ENCODE measurements at regions of chr10 and their contacts with region 1.

Region 1: DNA sequence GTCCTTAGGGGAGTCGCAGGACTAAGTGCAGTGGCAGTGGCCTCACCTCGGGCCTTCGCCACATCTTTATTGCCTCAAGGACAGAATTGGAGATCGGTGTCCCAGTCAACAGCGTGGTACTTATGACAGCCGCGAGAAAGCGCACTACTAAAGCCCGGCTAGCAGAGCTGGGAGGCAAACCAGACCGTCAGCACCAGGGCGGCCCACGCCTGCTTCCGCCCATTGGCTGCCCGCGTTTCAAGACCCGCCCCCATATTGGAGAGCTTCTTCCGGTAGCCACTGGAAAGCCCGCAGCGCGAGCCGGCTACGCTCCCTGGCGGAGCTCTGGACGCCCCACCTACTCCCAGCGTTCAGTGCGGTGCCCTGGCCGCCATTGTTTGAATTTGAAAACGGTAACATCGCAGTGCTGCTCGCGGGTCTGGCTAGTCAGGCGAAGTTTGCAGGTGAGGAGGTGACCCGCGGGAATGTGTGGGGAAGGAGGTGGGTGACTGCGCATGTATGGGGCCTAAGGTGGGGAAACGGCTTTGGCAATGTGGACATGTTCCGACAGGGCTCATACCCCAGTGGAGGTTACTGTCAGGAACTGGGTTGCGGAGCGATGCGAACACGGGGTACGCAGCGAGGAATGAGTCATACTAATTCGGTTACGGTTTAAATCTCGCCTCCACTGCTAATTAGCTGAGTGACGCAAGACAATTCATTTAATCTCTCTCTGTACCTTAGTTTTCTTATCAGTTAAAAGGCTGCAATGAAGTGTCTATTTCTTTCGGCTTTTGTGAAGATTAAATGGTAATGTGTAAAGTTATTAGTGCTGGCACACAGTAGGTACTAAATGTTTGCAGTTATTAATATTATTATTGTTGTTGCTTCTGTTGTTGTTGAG is at the start of gene KIF20B:
- DNase-seq: peak; percentile 84 to 96 (median 94)
- ATAC-seq: peak; percentile 99
- H3K4me3 ChIP-seq: peak within 1 kb of the TSS; percentile 92
- H3K4me3 Mint-ChIP-seq: peak within 1 kb of the TSS; percentile 94 to 100 (median 98)
- H3K27ac ChIP-seq: peak within 1 kb of the TSS; percentile 76
- H3K27ac Mint-ChIP-seq: peak within 1 kb of the TSS; percentile 93 to 99 (median 97)
- H3K4me1 ChIP-seq: peaks cover 8 to 11% of the 10 kb centered on the region in 2 donors
- H3K4me1 Mint-ChIP-seq: peaks cover 22 to 51% (median 41%) of the 10 kb centered on the region in 7 donors
- H3K27me3 ChIP-seq: no peaks in the 10 kb centered on the region
- H3K27me3 Mint-ChIP-seq: no peaks in the 10 kb centered on the region
- total RNA-seq, gene KIF20B: 14.5 to 49.0 (median 19.3) TPM

Region 2: GRCh38 chr10:88990384-88991160 is 710.9 kb before region 1 on chr10 and contains the start of gene FAS:
- CTCF ChIA-PET with region 1: no interaction called
- POLR2A ChIA-PET with region 1: interaction called, 3 read pairs
- intact Hi-C with region 1: loop called in 1 of 2 experiments (anchors 5 kb)
- DNase-seq: peak; percentile 50 to 81 (median 61)
- ATAC-seq: peak; percentile 86
- H3K4me3 ChIP-seq: peak within 1 kb of the TSS; percentile 86
- H3K4me3 Mint-ChIP-seq: peak within 1 kb of the TSS; percentile 92 to 100 (median 96)
- H3K27ac ChIP-seq: peak within 1 kb of the TSS; percentile 77
- H3K27ac Mint-ChIP-seq: peak within 1 kb of the TSS; percentile 91 to 96 (median 94)
- H3K4me1 ChIP-seq: peaks cover 42 to 45% of the 10 kb centered on the region in 2 donors
- H3K4me1 Mint-ChIP-seq: peaks cover 41 to 83% (median 68%) of the 10 kb centered on the region in 7 donors
- H3K27me3 ChIP-seq: no peaks in the 10 kb centered on the region
- H3K27me3 Mint-ChIP-seq: no peaks in the 10 kb centered on the region
- total RNA-seq, gene FAS: 5.6 to 67.4 (median 8.3) TPM

Region 3: DNA sequence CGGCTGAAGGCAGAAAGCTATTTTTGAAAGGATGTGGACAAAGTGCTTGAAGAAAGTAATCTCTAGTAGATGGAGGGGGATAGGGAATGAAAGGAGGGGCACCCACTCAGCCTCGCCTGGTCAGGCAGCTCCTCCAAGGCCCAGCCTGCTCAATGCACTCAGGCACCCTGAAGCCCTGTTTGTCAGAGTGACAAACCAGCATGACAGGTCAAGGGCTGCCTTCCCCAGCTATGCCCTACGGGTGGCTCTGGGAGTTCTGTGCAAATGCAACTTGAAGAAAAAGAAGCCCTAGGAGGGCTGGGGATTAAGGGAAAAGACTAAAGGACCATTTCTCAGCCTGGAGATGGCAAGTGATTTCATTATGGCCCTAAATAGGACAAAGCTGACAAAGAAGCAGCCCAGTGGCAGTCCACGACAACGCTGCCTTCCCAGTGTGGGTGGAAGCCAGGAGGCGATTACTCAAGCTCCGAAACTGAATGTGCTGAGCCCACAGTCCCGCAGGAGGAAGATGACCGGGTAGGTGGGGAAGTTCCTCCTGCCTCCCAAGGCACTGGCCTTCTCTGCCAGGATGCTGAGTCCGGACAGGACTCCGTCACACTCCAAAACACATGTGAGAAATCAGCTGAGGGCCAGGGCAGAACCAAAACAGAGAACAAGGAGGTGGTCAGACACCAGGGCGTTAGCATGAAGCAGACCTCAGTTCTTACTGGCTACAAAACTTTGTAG is 466.2 kb before region 1 on chr10:
- CTCF ChIA-PET with region 1: no interaction called
- POLR2A ChIA-PET with region 1: no interaction called
- intact Hi-C with region 1: no loop called
- DNase-seq: no peak
- ATAC-seq: peak; percentile 83
- H3K4me3 ChIP-seq: no peak overlapping the region
- H3K4me3 Mint-ChIP-seq: no peak overlapping the region
- H3K27ac ChIP-seq: no peak overlapping the region
- H3K27ac Mint-ChIP-seq: no peak overlapping the region
- H3K4me1 ChIP-seq: no peaks in the 10 kb centered on the region
- H3K4me1 Mint-ChIP-seq: peaks cover 0 to 6% (median 0%) of the 10 kb centered on the region in 7 donors
- H3K27me3 ChIP-seq: no peaks in the 10 kb centered on the region
- H3K27me3 Mint-ChIP-seq: no peaks in the 10 kb centered on the region

Region 4: GRCh38 chr10:89301721-89302445 is 399.6 kb before region 1 on chr10 and contains the start of gene IFIT2:
- CTCF ChIA-PET with region 1: no interaction called
- POLR2A ChIA-PET with region 1: no interaction called
- intact Hi-C with region 1: loop called in 1 of 2 experiments (anchors 1 kb)
- DNase-seq: peak in 7 of 9 donors; percentile 50 to 72 (median 60)
- ATAC-seq: peak; percentile 86
- H3K4me3 ChIP-seq: peak within 1 kb of the TSS; percentile 76
- H3K4me3 Mint-ChIP-seq: peak within 1 kb of the TSS; percentile 83 to 99 (median 94)
- H3K27ac ChIP-seq: peak within 1 kb of the TSS; percentile 71
- H3K27ac Mint-ChIP-seq: peak within 1 kb of the TSS; percentile 88 to 98 (median 97)
- H3K4me1 ChIP-seq: peaks cover 15 to 24% of the 10 kb centered on the region in 2 donors
- H3K4me1 Mint-ChIP-seq: peaks cover 24 to 60% (median 44%) of the 10 kb centered on the region in 7 donors
- H3K27me3 ChIP-seq: no peaks in the 10 kb centered on the region
- H3K27me3 Mint-ChIP-seq: peaks cover 0 to 25% (median 0%) of the 10 kb centered on the region in 5 donors
- total RNA-seq, gene IFIT2: 6.0 to 16.4 (median 8.4) TPM

Region 5: GRCh38 chr10:89563861-89564478 is 137.5 kb before region 1 on chr10:
- CTCF ChIA-PET with region 1: no interaction called
- POLR2A ChIA-PET with region 1: no interaction called
- intact Hi-C with region 1: loop called in 1 of 2 experiments (anchors 1 kb)
- DNase-seq: peak in 7 of 9 donors; percentile 13 to 58 (median 48)
- ATAC-seq: peak; percentile 65
- H3K4me3 ChIP-seq: no peak overlapping the region
- H3K4me3 Mint-ChIP-seq: no peak overlapping the region
- H3K27ac ChIP-seq: no peak overlapping the region
- H3K27ac Mint-ChIP-seq: no peak overlapping the region
- H3K4me1 ChIP-seq: no peaks in the 10 kb centered on the region
- H3K4me1 Mint-ChIP-seq: no peaks in the 10 kb centered on the region
- H3K27me3 ChIP-seq: no peaks in the 10 kb centered on the region
- H3K27me3 Mint-ChIP-seq: peaks cover 4 to 44% (median 14%) of the 10 kb centered on the region in 5 donors

Region 6: DNA sequence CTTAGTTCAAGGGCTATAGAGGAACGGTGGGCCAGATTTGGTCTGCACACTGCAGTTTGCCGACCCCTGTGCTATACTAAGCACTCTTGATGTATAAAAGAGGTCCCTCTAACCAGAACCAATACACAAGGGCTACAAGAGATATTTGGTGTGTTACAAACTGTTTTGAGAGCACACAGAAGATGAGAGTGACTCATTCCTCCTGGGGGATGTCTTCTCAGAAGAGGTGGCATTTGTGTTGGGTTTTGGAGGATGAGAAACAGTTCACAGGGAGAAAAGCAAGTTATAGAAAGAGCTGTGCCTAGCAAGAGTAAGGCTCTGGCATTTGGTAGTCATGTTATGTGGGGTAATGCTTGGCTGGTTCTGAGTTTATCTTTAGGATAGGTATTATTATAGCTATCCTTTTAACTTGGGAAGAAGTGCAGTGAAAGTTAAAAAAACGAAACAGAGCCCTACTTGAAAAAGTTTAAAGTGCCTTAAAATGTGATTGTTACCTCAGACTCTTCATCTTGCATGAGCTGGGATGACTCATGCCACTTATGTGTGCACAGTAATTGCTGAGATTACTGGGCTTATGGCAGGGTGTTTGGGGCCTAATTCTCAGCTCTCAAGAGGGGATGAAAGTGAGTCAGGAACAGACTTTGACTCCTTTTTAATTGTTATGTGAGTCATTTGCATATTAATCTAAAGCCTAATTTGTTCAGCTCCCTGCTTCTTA is 160.3 kb after region 1 on chr10:
- CTCF ChIA-PET with region 1: no interaction called
- POLR2A ChIA-PET with region 1: no interaction called
- intact Hi-C with region 1: loop called in 1 of 2 experiments (anchors 2 kb)
- DNase-seq: no peak
- ATAC-seq: no peak
- H3K4me3 ChIP-seq: no peak overlapping the region
- H3K4me3 Mint-ChIP-seq: peak overlapping the region in 6 of 10 donors; percentile 14 to 83 (median 74)
- H3K27ac ChIP-seq: no peak overlapping the region
- H3K27ac Mint-ChIP-seq: peak overlapping the region in 7 of 9 donors; percentile 6 to 86 (median 66)
- H3K4me1 ChIP-seq: peaks cover 0 to 12% of the 10 kb centered on the region in 2 donors
- H3K4me1 Mint-ChIP-seq: peaks cover 9 to 23% (median 16%) of the 10 kb centered on the region in 7 donors
- H3K27me3 ChIP-seq: no peaks in the 10 kb centered on the region
- H3K27me3 Mint-ChIP-seq: peaks cover 0 to 7% (median 0%) of the 10 kb centered on the region in 5 donors

Region 7: DNA sequence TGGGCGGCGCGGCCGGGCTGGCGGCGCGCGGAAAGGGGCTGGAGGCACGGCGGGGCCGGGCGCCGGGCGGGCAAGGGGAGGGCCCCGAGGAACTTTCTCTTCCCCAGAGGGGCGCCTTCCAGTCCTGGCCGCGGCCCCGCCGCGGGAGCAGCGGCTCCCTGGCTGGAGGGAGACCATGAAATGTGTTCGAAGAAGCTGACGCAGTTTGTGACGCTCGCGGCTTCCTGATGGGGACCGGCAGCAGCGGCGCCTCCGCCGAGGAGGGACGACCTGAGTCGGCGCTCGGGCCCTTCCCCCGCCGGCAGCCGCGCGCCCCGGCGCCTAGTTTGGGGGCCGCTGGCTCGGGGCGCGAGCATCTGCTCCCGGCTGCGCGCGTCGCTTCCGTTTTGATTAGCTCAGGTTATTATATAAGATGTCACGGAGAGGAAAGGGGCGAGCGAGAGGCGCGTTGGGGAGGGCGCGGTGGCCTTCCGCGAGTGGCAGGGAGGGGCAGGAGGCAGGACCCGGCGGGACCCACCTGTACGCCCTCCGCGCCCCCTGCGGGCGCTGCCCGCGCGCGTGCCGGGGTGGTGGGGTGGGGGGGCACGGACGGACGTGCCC is 1461.9 kb after region 1 on chr10:
- CTCF ChIA-PET with region 1: no interaction called
- POLR2A ChIA-PET with region 1: no interaction called
- intact Hi-C with region 1: loop called in 1 of 2 experiments (anchors 2 kb)
- DNase-seq: peak; percentile 72 to 92 (median 88)
- ATAC-seq: peak; percentile 75
- H3K4me3 ChIP-seq: peak overlapping the region; percentile 74
- H3K4me3 Mint-ChIP-seq: peak overlapping the region; percentile 88 to 95 (median 93)
- H3K27ac ChIP-seq: peak overlapping the region; percentile 96
- H3K27ac Mint-ChIP-seq: peak overlapping the region; percentile 88 to 98 (median 95)
- H3K4me1 ChIP-seq: peaks cover 8 to 20% of the 10 kb centered on the region in 2 donors
- H3K4me1 Mint-ChIP-seq: peaks cover 27 to 61% (median 51%) of the 10 kb centered on the region in 7 donors
- H3K27me3 ChIP-seq: no peaks in the 10 kb centered on the region
- H3K27me3 Mint-ChIP-seq: peaks cover 0 to 19% (median 0%) of the 10 kb centered on the region in 5 donors

Measured in naive thymus-derived CD4-positive, alpha-beta T cell (primary cell).